Brain microvascular endothelial cell (primary cell): ENCODE measurements at regions of chr12 and their contacts with region 1.

Region 1: GRCh38 chr12:90978117-90978770 is 23.3 kb upstream of the CCER1 start:
- DNase-seq: peak; percentile 28
- H3K4me3 ChIP-seq: no peak overlapping the region
- H3K27ac ChIP-seq: no peak overlapping the region
- H3K27me3 ChIP-seq: no peaks in the 10 kb centered on the region
- CTCF ChIP-seq: peak; percentile 58

Region 2: GRCh38 chr12:90896164-90896563 is 82.1 kb before region 1 on chr12:
- in situ Hi-C with region 1: no loop called
- DNase-seq: peak; percentile 63
- H3K4me3 ChIP-seq: no peak overlapping the region
- H3K27ac ChIP-seq: peak overlapping the region; percentile 48
- H3K27me3 ChIP-seq: no peaks in the 10 kb centered on the region
- CTCF ChIP-seq: no peak

Region 3: GRCh38 chr12:91326058-91327027 is 348.1 kb after region 1 on chr12:
- in situ Hi-C with region 1: loop called (anchors 25 kb)
- DNase-seq: peak; percentile 74
- H3K4me3 ChIP-seq: no peak overlapping the region
- H3K27ac ChIP-seq: no peak overlapping the region
- H3K27me3 ChIP-seq: no peaks in the 10 kb centered on the region
- CTCF ChIP-seq: peak; percentile 76